ENCODE measurements at regions of chr7 and their contacts with region 1.

Region 1: DNA sequence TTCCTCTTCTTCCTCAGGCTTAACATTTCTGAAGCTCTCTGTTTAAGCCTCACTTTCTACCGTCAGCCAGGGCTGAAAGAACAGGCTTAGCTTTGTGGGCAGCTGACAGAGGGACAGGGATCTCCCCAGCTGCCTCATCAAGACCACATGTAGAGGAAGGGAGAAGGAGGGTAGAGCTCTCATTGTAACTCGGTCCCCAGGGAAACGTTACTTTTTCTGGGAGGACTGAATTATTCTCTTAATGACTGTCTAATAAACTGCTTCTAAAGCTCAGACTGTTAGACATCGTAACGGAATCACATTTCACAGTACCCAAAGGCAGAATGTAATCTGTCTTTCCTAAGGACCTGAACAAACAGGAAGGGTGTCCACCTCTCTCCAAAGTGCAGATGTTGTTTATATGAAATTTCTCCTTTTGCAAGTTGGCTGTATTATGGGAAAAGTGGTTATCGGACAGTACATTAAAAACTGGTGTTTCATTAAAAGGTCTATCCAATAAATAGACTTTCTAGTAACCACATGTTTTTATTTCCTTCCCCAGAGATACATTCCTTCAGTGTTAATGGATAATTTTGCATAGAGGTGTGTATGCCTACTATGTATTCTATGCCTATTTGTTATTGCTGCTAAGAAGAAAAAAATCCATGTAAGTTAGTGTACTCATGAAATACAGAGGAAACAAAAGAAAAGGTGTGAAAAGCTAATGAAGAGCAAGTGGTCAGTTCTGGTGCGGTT is 144.2 kb downstream of the CTTNBP2 start:
- DNase-seq: no peak
- H3K4me3 ChIP-seq: no peak overlapping the region
- CTCF ChIP-seq: no peak
- POLR2A ChIP-seq: no peak

Region 2: GRCh38 chr7:116969371-116969902 is 759.6 kb before region 1 on chr7:
- intact Hi-C with region 1: loop called (anchors 5 kb)
- DNase-seq: no peak
- H3K4me3 ChIP-seq: no peak overlapping the region
- CTCF ChIP-seq: no peak
- POLR2A ChIP-seq: no peak